ENCODE measurements at regions of chr1 and their contacts with region 1.

Region 1: GRCh38 chr1:154479764-154480421 is 22.1 kb upstream of the TDRD10 start:
- DNase-seq: peak in 1 of 2 donors; percentile 79
- ATAC-seq: peak; percentile 84 to 92 (median 90)
- H3K4me3 ChIP-seq: no peak overlapping the region
- H3K27ac ChIP-seq: peak overlapping the region in 4 of 10 donors; percentile 23 to 66 (median 44)
- H3K4me1 ChIP-seq: peaks cover 0 to 49% (median 27%) of the 10 kb centered on the region in 9 donors
- H3K27me3 ChIP-seq: no peaks in the 10 kb centered on the region
- CTCF ChIP-seq: peak; percentile 85 to 95 (median 94)

Region 2: GRCh38 chr1:154539507-154540483 is 59.9 kb after region 1 on chr1:
- intact Hi-C with region 1: loop called in 4 of 10 experiments (anchors 2 to 5 kb)
- DNase-seq: no peak
- ATAC-seq: no peak
- H3K4me3 ChIP-seq: no peak overlapping the region
- H3K27ac ChIP-seq: no peak overlapping the region
- H3K4me1 ChIP-seq: peaks cover 0 to 9% (median 0%) of the 10 kb centered on the region in 9 donors
- H3K27me3 ChIP-seq: no peaks in the 10 kb centered on the region
- CTCF ChIP-seq: no peak

Region 3: GRCh38 chr1:154870115-154870571 is 390.2 kb after region 1 on chr1 and contains the start of gene KCNN3:
- intact Hi-C with region 1: loop called in 6 of 10 experiments (anchors 5 to 10 kb)
- DNase-seq: peak; percentile 93
- ATAC-seq: peak; percentile 96 to 98 (median 98)
- H3K4me3 ChIP-seq: peak within 1 kb of the TSS; percentile 11 to 66 (median 56)
- H3K27ac ChIP-seq: peak within 1 kb of the TSS in 8 of 10 donors; percentile 23 to 68 (median 40)
- H3K4me1 ChIP-seq: peaks cover 8 to 47% (median 38%) of the 10 kb centered on the region in 9 donors
- H3K27me3 ChIP-seq: peaks cover 0 to 26% (median 0%) of the 10 kb centered on the region in 7 donors
- CTCF ChIP-seq: no peak
- total RNA-seq, gene KCNN3: 0.52 to 5.9 (median 2.7) TPM

Region 4: GRCh38 chr1:154884869-154885701 is 405.2 kb after region 1 on chr1:
- intact Hi-C with region 1: loop called in 1 of 10 experiments (anchors 5 kb)
- DNase-seq: no peak
- ATAC-seq: peak in 3 of 8 donors; percentile 45 to 47 (median 46)
- H3K4me3 ChIP-seq: no peak overlapping the region
- H3K27ac ChIP-seq: no peak overlapping the region
- H3K4me1 ChIP-seq: peaks cover 2 to 25% (median 14%) of the 10 kb centered on the region in 9 donors
- H3K27me3 ChIP-seq: no peaks in the 10 kb centered on the region
- CTCF ChIP-seq: no peak